ENCODE measurements at regions of chr1 and their contacts with region 1.

Region 1: DNA sequence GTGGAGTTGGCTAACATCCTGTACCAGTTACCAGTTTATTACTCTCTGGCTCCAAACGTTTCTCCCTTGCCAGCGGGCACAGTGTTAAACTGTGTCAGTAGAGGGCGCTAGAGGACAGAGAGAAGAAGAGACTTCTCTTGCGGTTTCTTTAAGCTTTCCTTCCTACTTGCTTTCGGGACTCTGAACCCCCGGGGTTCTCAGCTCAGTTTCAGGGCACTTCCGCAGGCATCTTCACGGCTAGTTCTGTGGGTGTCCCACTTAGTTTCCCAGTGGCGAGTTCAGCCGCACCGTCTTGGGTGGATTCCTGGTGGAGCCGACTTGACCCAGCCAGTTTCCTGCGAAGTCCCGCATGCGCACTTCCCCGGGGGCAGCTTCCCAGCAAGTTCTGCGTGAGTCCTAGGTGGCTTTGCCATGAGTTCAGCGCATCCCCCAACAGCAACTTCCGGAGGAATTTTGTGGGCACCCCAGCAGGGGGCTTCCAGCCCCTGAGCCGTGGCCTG is 37.9 kb upstream of the BTG2 start:
- DNase-seq: peak; percentile 87
- ATAC-seq: peak; percentile 49
- H3K4me3 Mint-ChIP-seq: peak overlapping the region; percentile 78
- H3K27ac Mint-ChIP-seq: peak overlapping the region; percentile 87
- H3K4me1 Mint-ChIP-seq: peaks cover 11% of the 10 kb centered on the region
- H3K27me3 Mint-ChIP-seq: no peaks in the 10 kb centered on the region
- CTCF ChIP-seq: peak; percentile 88

Region 2: DNA sequence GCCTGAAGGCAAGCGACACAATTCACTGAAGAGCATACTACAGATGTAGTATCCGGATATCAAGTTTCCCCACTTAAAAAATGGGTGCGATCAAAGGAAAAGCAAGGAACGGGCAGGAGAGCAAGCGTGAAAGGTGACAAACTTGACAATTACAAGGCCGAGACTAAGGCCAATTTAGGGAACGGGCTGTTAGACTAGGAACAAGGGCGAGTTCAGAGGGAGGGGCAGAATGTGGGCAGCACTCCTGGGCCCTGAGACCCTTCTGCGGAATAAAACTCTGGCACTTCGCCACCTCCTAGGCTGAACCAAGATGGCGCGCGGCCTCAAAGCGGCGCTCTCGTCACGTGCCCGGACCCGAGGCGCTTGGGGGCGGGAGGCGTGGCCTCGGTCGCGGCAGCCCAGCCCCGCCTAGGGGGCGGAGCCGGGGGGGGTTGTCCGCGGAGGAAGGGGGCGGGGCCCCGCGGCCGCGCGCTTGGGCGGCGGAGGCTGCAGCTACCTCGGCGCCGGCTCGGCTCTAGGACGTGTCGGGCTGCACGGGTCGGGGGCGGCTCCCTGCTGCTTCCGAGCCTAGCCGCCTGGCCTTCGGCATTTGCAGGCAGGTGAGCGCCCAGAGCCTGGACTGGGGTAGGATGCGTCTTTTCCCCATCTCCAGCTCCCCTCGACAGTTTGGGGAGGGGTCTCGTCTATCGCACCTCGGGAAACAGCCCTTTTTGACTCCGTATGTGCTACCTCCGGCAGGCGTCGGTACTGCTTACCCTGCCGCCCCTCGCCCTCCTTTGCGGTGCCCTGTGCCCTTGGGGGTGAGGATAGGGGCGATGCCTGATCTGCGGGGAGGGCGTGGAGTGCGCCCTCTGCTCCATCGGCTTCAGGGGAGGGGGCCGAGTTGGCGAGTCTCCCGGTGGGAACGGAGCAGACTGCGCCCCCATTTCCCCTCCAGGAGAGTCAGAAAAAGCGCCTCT is 241.1 kb before region 1 on chr1 and contains the start of gene PPFIA4:
- CTCF ChIA-PET with region 1: interaction called, 11 read pairs
- POLR2A ChIA-PET with region 1: no interaction called
- intact Hi-C with region 1: no loop called
- DNase-seq: peak; percentile 92
- ATAC-seq: peak; percentile 97
- H3K4me3 Mint-ChIP-seq: peak within 1 kb of the TSS; percentile 89
- H3K27ac Mint-ChIP-seq: peak within 1 kb of the TSS; percentile 82
- H3K4me1 Mint-ChIP-seq: peaks cover 17% of the 10 kb centered on the region
- H3K27me3 Mint-ChIP-seq: peaks cover 10% of the 10 kb centered on the region
- CTCF ChIP-seq: no peak
- total RNA-seq, gene PPFIA4: 78.8 to 79.9 TPM

Region 3: DNA sequence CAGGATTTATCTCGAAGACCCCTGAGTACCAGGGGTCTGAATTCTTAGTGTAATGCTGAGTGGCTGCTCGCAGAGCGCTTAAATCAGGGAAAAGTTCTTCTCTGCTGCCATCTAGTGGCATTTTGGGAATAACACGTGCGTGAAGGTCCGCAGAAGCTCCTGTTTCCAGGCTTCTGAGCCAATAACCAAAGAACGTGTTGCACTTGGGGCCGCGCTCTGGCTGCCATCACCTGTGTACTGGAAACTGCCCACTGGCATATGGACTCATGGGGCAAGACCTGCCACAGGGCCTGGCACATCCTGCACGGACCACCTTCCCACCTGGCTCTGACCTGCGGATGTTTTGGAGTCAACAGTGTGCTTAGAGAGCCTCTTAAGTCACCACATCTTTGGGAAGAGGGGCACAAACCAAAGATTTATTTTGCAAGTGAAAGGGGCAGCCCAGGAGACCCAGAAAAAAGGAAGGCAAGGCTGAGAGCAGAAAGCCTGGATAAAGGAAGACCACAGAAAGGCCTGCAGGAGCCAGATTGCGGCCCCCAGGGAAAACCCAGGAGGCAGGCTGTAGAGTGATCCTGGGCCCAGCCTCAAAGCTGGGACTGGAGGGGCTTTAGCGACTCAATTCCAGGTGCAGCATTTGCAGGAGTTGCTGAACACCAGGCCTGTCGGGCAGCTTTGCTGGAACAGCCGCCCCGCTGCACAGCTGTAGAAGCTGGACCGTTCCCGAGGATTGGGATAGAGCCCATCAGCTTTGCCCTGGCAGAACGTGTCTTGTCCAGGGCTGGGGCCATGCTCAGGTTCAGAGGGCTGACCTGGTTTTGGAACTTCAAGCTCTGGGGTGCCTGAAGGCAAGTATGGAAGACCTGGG is 50.9 kb before region 1 on chr1:
- CTCF ChIA-PET with region 1: interaction called, 26 read pairs
- POLR2A ChIA-PET with region 1: no interaction called
- intact Hi-C with region 1: no loop called
- DNase-seq: peak; percentile 69
- ATAC-seq: peak; percentile 67
- H3K4me3 Mint-ChIP-seq: no peak overlapping the region
- H3K27ac Mint-ChIP-seq: no peak overlapping the region
- H3K4me1 Mint-ChIP-seq: no peaks in the 10 kb centered on the region
- H3K27me3 Mint-ChIP-seq: no peaks in the 10 kb centered on the region
- CTCF ChIP-seq: peak; percentile 83

Region 4: GRCh38 chr1:203340112-203340804 is 72.9 kb after region 1 on chr1:
- CTCF ChIA-PET with region 1: interaction called, 1,114 read pairs
- POLR2A ChIA-PET with region 1: interaction called, 31 read pairs
- intact Hi-C with region 1: no loop called
- DNase-seq: peak; percentile 71
- ATAC-seq: peak; percentile 81
- H3K4me3 Mint-ChIP-seq: no peak overlapping the region
- H3K27ac Mint-ChIP-seq: no peak overlapping the region
- H3K4me1 Mint-ChIP-seq: peaks cover 17% of the 10 kb centered on the region
- H3K27me3 Mint-ChIP-seq: peaks cover 11% of the 10 kb centered on the region
- CTCF ChIP-seq: peak; percentile 91

Region 5: DNA sequence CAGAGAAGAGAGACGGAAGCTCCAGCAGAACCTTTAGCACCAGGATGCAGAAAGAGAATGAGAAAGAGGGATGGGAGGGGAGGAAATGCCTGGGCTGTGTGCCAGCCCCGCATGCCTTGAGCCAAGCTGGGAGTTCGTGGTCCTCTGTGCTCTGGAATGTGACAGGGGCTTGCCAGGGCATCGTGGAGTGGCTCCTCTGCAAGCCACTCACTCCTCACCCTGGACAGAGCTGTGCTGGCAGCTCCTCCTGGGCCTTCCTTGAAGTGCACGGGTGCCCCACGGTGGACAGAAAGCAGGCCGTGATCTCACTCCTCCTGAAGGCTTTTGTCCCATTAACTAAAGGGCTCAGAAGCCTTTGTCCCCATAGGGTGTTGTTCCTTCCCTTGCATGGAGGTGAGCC is 173.4 kb after region 1 on chr1:
- CTCF ChIA-PET with region 1: interaction called, 12 read pairs
- POLR2A ChIA-PET with region 1: no interaction called
- intact Hi-C with region 1: no loop called
- DNase-seq: no peak
- ATAC-seq: no peak
- H3K4me3 Mint-ChIP-seq: no peak overlapping the region
- H3K27ac Mint-ChIP-seq: no peak overlapping the region
- H3K4me1 Mint-ChIP-seq: no peaks in the 10 kb centered on the region
- H3K27me3 Mint-ChIP-seq: peaks cover 1% of the 10 kb centered on the region
- CTCF ChIP-seq: no peak

Region 6: DNA sequence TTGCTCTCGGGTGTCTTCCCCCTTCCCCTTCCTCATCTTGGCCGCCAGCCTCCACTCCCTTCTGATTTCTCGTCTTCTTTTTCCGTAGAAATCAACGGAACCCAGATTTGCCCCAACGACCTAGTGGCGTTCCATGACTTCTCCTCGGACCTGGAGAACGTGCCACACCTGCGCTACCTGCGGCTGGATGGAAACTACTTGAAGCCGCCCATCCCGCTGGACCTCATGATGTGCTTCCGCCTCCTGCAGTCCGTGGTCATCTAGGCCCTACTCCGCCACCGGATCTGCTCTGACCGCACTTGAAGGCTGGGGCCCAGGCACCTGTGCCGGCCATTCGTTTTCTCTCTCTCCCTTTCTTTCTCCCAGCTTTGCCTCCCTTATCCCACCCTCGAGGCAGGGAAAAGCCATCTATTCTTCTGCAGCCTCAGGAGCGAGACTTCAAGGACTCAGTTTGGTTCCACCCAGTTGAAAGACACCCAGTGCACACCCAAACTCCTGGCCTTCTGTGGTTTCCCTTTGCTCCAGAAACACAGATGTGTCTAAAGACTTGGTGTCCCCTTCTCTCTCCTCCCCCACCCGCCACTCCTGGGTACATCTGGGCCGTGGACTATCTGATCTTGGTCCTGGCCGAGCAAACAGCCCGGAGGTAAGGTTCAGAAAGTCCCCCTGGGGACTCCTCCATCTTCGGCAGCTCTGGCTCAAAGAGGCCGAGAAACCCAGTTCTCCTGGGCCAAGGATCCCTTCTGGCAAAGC is 219.4 kb after region 1 on chr1:
- CTCF ChIA-PET with region 1: interaction called, 166 read pairs
- POLR2A ChIA-PET with region 1: interaction called, 3 read pairs
- intact Hi-C with region 1: loop called (anchors 2 kb)
- DNase-seq: no peak
- ATAC-seq: no peak
- H3K4me3 Mint-ChIP-seq: peak overlapping the region; percentile 58
- H3K27ac Mint-ChIP-seq: no peak overlapping the region
- H3K4me1 Mint-ChIP-seq: peaks cover 6% of the 10 kb centered on the region
- H3K27me3 Mint-ChIP-seq: no peaks in the 10 kb centered on the region
- CTCF ChIP-seq: no peak

Region 7: GRCh38 chr1:203702130-203702577 is 434.8 kb after region 1 on chr1:
- CTCF ChIA-PET with region 1: interaction called, 18 read pairs
- POLR2A ChIA-PET with region 1: no interaction called
- intact Hi-C with region 1: no loop called
- DNase-seq: peak; percentile 80
- ATAC-seq: peak; percentile 87
- H3K4me3 Mint-ChIP-seq: no peak overlapping the region
- H3K27ac Mint-ChIP-seq: peak overlapping the region; percentile 44
- H3K4me1 Mint-ChIP-seq: peaks cover 2% of the 10 kb centered on the region
- H3K27me3 Mint-ChIP-seq: no peaks in the 10 kb centered on the region
- CTCF ChIP-seq: peak; percentile 96